Activated T-helper 2 cell treated with anti-CD3 and anti-CD28 coated beads, Interferon-gamma antibody, Interleukin-2, Interleukin-4, amounts not matched to agents 10 μg/mL and 5 μg/mL and 100 μg/mL, durations not matched to agents 14 hours and 24 hours and 36 hours (primary cell): ENCODE measurements at regions of chr3 and their contacts with region 1.

Region 1: GRCh38 chr3:11236595-11237461 is 35.4 kb upstream of the ATG7 start:
- DNase-seq: peak; percentile 55
- H3K4me3 Mint-ChIP-seq: no peak overlapping the region
- H3K27ac Mint-ChIP-seq: no peak overlapping the region
- H3K4me1 Mint-ChIP-seq: peaks cover 24% of the 10 kb centered on the region
- H3K27me3 Mint-ChIP-seq: peaks cover 26% of the 10 kb centered on the region

Region 2: GRCh38 chr3:11136871-11137626 is 99.8 kb before region 1 on chr3:
- intact Hi-C with region 1: no loop called
- DNase-seq: no peak
- H3K4me3 Mint-ChIP-seq: no peak overlapping the region
- H3K27ac Mint-ChIP-seq: no peak overlapping the region
- H3K4me1 Mint-ChIP-seq: peaks cover 15% of the 10 kb centered on the region
- H3K27me3 Mint-ChIP-seq: peaks cover 5% of the 10 kb centered on the region

Region 3: DNA sequence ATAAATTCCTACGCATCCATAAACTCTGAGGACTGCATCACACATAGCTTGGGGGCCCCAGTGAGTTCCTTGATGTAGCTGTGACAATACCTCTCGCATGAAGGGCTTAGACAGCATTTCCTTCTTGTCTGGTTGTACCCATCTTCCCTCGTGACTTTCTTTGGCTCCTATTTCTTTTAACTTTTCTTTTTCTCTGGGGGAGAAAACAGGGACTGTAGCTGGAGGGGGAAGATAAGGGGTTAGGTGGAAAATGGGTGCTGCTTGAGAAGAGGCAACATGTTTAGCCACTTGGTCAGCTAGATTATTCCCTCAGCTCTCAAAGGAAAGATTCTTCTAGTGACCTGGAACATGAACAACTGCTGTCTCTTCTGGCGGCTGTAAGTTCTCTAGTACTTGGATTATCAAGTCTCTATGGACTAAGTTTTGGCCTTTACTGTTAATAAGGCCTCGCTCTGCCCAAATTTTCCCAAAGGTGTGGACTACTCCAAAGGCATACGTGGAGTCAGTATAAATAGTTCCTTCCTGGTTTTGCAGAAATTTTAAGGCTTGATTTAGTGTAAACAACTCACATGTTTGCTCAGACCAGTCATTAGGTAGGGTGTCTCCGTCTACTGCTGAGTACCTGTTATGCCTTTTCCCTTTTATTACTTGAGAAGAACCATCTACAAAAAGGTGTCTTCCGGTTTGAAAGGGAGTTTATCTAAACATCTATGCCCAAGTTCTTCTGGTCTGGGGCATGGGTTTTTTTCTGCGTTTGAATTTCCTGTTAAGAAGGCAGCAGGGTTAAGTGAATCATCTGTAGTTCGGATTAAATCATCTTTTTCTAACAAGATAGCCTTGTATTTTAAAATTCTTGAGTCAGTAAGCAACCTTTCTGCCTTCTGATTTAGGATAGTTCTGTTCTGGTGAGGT is 14.3 kb after region 1 on chr3:
- intact Hi-C with region 1: loop called (anchors 1 kb)
- DNase-seq: no peak
- H3K4me3 Mint-ChIP-seq: peak overlapping the region; percentile 64
- H3K27ac Mint-ChIP-seq: peak overlapping the region; percentile 81
- H3K4me1 Mint-ChIP-seq: peaks cover 19% of the 10 kb centered on the region
- H3K27me3 Mint-ChIP-seq: no peaks in the 10 kb centered on the region

Region 4: GRCh38 chr3:11290743-11291680 is 54.2 kb after region 1 on chr3:
- intact Hi-C with region 1: loop called (anchors 1 kb)
- DNase-seq: peak; percentile 20
- H3K4me3 Mint-ChIP-seq: peak overlapping the region; percentile 37
- H3K27ac Mint-ChIP-seq: peak overlapping the region; percentile 89
- H3K4me1 Mint-ChIP-seq: peaks cover 52% of the 10 kb centered on the region
- H3K27me3 Mint-ChIP-seq: no peaks in the 10 kb centered on the region

Region 5: DNA sequence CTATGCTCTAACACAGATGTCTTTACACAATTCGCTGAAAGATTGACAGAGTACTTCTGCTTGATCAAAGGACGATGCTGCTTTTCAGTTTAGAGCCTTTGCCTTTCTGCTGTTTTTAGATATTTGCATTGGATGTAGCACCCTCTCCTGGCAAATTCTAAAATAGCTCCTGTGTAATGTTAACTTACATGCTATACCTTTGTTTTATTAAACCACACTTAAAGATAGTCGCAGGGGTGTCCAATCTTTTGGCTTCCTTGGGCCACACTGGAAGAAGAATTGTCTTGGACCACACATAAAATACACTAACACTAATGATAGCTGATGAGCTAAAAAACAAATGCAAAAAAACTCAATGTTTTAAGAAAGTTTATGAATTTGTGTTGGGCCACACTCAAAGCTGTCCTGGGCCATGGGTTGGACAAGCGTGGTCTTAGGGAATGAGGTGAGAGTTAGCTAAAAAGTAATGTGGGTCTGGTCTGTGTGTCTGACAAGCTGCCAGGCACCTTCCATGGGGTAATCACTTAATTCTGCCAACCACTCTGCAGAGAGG is 98.3 kb after region 1 on chr3:
- intact Hi-C with region 1: loop called (anchors 1 kb)
- DNase-seq: no peak
- H3K4me3 Mint-ChIP-seq: no peak overlapping the region
- H3K27ac Mint-ChIP-seq: no peak overlapping the region
- H3K4me1 Mint-ChIP-seq: peaks cover 10% of the 10 kb centered on the region
- H3K27me3 Mint-ChIP-seq: no peaks in the 10 kb centered on the region